CD4-positive, alpha-beta memory T cell (primary cell): ENCODE measurements at regions of chr4 and their contacts with region 1.

Region 1: GRCh38 chr4:154551872-154552686 is 1.9 kb upstream of the PLRG1 start:
- DNase-seq: peak; percentile 68 to 72 (median 68)
- H3K4me3 ChIP-seq: no peak overlapping the region
- H3K4me3 Mint-ChIP-seq: peak overlapping the region in 2 of 8 donors; percentile 29 to 57
- H3K27ac ChIP-seq: no peak overlapping the region
- H3K27ac Mint-ChIP-seq: peak overlapping the region in 3 of 7 donors; percentile 18 to 62 (median 47)
- H3K4me1 ChIP-seq: peaks cover 22% of the 10 kb centered on the region
- H3K4me1 Mint-ChIP-seq: peaks cover 13 to 28% (median 24%) of the 10 kb centered on the region in 4 donors
- H3K27me3 ChIP-seq: no peaks in the 10 kb centered on the region
- H3K27me3 Mint-ChIP-seq: no peaks in the 10 kb centered on the region

Region 2: DNA sequence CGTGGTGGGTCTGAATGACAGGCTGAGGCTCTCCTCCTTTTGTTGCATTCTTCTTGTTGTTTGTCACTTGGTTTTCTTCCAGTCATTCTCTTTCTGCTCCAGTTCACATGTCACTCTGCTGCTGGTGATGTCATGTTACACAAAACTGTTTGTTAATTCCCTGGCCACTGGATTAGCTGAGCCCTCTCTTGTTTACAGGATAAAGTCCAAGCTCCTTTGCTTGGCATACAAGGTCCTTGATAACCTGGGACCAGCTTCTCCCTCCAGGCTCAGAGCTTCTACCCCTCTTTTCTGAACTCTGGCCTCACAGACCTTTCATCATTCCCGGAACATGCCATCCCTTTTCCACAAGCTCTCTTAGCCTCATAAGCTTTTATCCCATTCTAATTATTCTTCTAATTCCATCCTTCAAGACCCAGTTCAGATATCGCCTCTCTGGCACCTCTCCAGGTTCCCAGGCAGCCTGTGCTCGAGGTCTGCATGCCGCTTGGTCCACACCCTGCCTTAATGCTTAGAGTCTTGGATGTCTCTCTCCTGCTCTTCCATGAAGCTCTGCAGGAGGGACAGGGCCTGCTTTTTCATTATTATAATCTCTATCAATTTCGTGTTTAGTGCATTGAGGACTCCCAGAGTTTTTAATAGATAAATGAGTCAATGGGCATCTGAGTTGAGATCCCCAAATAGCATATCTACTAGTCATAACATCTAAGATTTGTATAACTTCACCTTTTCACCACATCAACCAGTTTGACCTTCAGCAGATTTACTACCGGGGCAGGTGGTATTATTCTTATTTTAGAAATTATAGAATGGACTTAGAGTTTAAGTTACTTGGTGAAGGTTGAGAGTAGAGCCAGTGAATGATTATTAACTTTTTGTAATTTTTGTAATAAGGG is 987.2 kb before region 1 on chr4:
- CTCF ChIA-PET with region 1: no interaction called
- POLR2A ChIA-PET with region 1: no interaction called
- intact Hi-C with region 1: no loop called
- DNase-seq: no peak
- H3K4me3 ChIP-seq: no peak overlapping the region
- H3K4me3 Mint-ChIP-seq: peak overlapping the region in 1 of 8 donors; percentile 35
- H3K27ac ChIP-seq: no peak overlapping the region
- H3K27ac Mint-ChIP-seq: peak overlapping the region; percentile 28 to 70 (median 37)
- H3K4me1 ChIP-seq: no peaks in the 10 kb centered on the region
- H3K4me1 Mint-ChIP-seq: peaks cover 32 to 52% (median 42%) of the 10 kb centered on the region in 4 donors
- H3K27me3 ChIP-seq: no peaks in the 10 kb centered on the region
- H3K27me3 Mint-ChIP-seq: no peaks in the 10 kb centered on the region

Region 3: DNA sequence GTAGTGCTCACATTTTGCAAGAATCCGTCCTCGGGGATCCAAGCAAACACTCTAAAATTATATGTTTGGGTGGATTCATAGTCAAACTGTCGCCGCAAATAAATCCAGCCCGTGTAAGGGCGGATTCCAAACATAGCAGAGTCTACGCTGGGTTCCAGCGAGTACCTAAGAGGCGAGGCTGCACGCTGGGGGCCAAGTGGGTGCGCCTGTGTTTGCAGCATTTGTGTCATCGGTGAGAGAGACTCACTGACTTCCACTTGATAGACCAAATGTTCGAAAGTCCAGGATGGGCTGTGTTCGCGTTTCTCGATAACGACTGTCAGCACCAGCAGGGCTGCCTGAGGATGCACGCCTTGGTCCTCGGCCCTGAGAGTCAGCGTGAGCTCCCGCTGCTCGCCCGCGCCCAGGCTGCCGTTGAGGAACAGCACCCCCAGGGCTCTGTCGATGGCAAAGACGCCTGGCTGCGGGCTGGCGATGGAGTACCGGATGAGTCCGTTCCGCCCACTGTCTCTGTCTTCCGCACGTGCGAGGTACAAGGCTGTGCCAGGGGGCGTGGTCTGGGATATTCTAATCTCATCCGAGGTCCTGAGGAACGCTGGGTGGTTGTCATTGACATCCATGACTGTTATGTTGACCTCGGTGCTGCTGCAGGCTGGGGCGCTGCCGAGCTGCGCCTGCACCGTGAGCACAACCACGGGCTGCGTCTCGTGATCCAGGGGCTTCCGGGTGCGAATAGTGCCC is 219.2 kb before region 1 on chr4:
- CTCF ChIA-PET with region 1: no interaction called
- POLR2A ChIA-PET with region 1: no interaction called
- intact Hi-C with region 1: loop called (anchors 5 kb)
- DNase-seq: peak; percentile 34 to 64 (median 47)
- H3K4me3 ChIP-seq: peak overlapping the region in 1 of 2 donors; percentile 52
- H3K4me3 Mint-ChIP-seq: peak overlapping the region; percentile 75 to 92 (median 84)
- H3K27ac ChIP-seq: no peak overlapping the region
- H3K27ac Mint-ChIP-seq: peak overlapping the region in 4 of 7 donors; percentile 11 to 83 (median 52)
- H3K4me1 ChIP-seq: peaks cover 14% of the 10 kb centered on the region
- H3K4me1 Mint-ChIP-seq: peaks cover 5 to 13% (median 7%) of the 10 kb centered on the region in 4 donors
- H3K27me3 ChIP-seq: peaks cover 4% of the 10 kb centered on the region
- H3K27me3 Mint-ChIP-seq: peaks cover 9 to 10% of the 10 kb centered on the region in 2 donors

Region 4: DNA sequence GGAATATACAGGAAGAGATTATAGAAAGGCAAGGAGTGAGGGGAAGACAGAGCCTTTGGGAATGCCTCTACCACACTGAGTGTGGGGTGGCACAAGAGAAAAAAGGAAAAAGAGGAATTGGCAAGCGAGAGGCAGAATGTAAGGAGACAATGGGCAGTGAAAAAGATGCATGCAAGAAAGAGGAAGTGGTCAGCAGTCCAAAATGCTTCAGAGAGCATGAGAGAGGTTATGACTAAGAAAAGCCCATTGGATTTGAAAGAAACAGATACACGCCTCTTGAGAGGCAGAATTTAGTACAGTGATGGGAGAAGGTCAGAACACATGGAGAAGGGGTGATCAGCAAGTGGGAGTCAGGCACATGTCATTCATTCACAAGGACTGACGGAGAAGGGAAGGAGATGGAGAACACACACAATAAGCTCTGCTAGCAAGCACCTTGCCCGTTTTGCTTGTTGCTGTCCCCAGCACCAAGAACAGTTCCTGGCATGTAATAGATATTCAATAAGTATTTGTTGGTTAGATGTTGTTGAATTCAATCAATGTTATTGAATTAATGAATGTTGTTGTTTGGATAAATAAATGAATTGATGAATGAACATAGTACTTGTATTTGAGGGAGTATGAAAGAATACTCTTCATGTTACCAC is 66.8 kb before region 1 on chr4:
- CTCF ChIA-PET with region 1: no interaction called
- POLR2A ChIA-PET with region 1: no interaction called
- intact Hi-C with region 1: no loop called
- DNase-seq: no peak
- H3K4me3 ChIP-seq: no peak overlapping the region
- H3K4me3 Mint-ChIP-seq: no peak overlapping the region
- H3K27ac ChIP-seq: no peak overlapping the region
- H3K27ac Mint-ChIP-seq: no peak overlapping the region
- H3K4me1 ChIP-seq: no peaks in the 10 kb centered on the region
- H3K4me1 Mint-ChIP-seq: peaks cover 0 to 6% (median 0%) of the 10 kb centered on the region in 4 donors
- H3K27me3 ChIP-seq: peaks cover 5% of the 10 kb centered on the region
- H3K27me3 Mint-ChIP-seq: peaks cover 11 to 19% of the 10 kb centered on the region in 2 donors

Region 5: GRCh38 chr4:154590329-154591006 is 38.4 kb after region 1 on chr4 and contains the start of gene FGA:
- CTCF ChIA-PET with region 1: no interaction called
- POLR2A ChIA-PET with region 1: no interaction called
- intact Hi-C with region 1: no loop called
- DNase-seq: no peak
- H3K4me3 ChIP-seq: no peak within 1 kb of the TSS
- H3K4me3 Mint-ChIP-seq: no peak within 1 kb of the TSS
- H3K27ac ChIP-seq: no peak within 1 kb of the TSS
- H3K27ac Mint-ChIP-seq: no peak within 1 kb of the TSS
- H3K4me1 ChIP-seq: no peaks in the 10 kb centered on the region
- H3K4me1 Mint-ChIP-seq: peaks cover 0 to 2% (median 0%) of the 10 kb centered on the region in 4 donors
- H3K27me3 ChIP-seq: no peaks in the 10 kb centered on the region
- H3K27me3 Mint-ChIP-seq: peaks cover 13 to 19% of the 10 kb centered on the region in 2 donors
- total RNA-seq, gene FGA: not detected

Region 6: GRCh38 chr4:154741922-154742850 is 190.1 kb after region 1 on chr4:
- CTCF ChIA-PET with region 1: no interaction called
- POLR2A ChIA-PET with region 1: no interaction called
- intact Hi-C with region 1: no loop called
- DNase-seq: no peak
- H3K4me3 ChIP-seq: no peak overlapping the region
- H3K4me3 Mint-ChIP-seq: peak overlapping the region; percentile 25 to 91 (median 48)
- H3K27ac ChIP-seq: no peak overlapping the region
- H3K27ac Mint-ChIP-seq: no peak overlapping the region
- H3K4me1 ChIP-seq: peaks cover 18% of the 10 kb centered on the region
- H3K4me1 Mint-ChIP-seq: peaks cover 6 to 34% (median 12%) of the 10 kb centered on the region in 4 donors
- H3K27me3 ChIP-seq: peaks cover 13% of the 10 kb centered on the region
- H3K27me3 Mint-ChIP-seq: peaks cover 31 to 44% of the 10 kb centered on the region in 2 donors

Region 7: DNA sequence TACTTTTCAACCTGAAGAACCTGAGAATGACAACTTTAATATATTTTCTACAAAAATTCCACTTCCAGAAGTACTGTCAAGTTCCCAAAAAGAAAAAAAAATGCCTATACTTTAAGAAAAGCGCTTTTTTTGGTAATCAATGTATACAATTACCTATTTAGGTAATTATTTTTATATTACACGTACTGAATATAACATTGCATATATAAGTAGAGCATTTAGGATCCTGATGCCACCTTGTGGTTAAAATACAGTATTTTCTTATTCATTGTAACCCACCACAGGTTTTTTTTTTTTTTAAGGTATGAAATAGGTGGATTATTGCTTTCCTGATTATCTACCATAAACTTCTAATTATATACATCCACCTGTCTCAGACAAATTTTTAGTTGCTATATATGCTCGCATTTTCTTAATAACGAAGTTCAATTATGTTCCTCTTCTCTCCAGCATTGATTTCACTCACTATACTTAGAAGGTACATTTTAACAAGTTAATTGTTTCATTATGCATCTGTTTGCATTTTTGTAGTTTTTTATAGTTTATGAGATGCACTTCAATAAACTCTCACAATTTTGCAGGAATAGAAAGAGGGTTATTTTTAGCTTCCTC is 819.5 kb after region 1 on chr4:
- CTCF ChIA-PET with region 1: interaction called, 37 read pairs
- POLR2A ChIA-PET with region 1: interaction called, 19 read pairs
- intact Hi-C with region 1: loop called (anchors 1 kb)
- DNase-seq: peak in 4 of 5 donors; percentile 24 to 41 (median 28)
- H3K4me3 ChIP-seq: no peak overlapping the region
- H3K4me3 Mint-ChIP-seq: no peak overlapping the region
- H3K27ac ChIP-seq: no peak overlapping the region
- H3K27ac Mint-ChIP-seq: peak overlapping the region in 1 of 7 donors; percentile 50
- H3K4me1 ChIP-seq: peaks cover 10% of the 10 kb centered on the region
- H3K4me1 Mint-ChIP-seq: peaks cover 5 to 18% (median 14%) of the 10 kb centered on the region in 4 donors
- H3K27me3 ChIP-seq: no peaks in the 10 kb centered on the region
- H3K27me3 Mint-ChIP-seq: no peaks in the 10 kb centered on the region

Region 8: DNA sequence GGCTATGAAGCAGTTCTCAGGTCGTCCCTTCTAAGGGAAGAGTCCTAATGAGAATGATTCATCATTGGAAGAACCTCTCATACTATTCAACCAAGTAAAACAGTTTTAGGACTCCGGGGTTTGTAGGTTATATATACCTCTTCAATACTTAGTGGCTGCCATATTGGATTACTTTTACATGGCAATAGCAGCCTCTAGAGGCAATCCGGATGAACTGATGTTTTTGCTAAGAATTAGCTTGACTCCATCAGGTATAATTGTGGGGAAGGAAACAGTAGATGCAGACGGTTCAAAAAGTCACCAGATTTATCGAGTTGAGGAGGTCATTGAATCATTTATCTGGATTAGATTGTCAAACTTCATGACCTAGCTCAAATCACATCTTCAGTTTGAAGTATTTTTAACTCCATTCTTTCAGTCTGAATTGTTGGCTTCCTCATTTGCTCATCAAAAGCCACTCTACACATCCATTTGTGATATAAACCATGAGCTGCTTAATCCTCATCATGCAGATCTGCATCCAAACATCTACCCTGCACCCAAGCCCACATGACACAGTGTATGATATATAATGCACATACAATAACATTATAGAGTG is 1235.1 kb after region 1 on chr4:
- CTCF ChIA-PET with region 1: no interaction called
- POLR2A ChIA-PET with region 1: no interaction called
- intact Hi-C with region 1: loop called (anchors 10 kb)
- DNase-seq: peak in 3 of 5 donors; percentile 4 to 15 (median 13)
- H3K4me3 ChIP-seq: no peak overlapping the region
- H3K4me3 Mint-ChIP-seq: peak overlapping the region in 1 of 8 donors; percentile 27
- H3K27ac ChIP-seq: no peak overlapping the region
- H3K27ac Mint-ChIP-seq: no peak overlapping the region
- H3K4me1 ChIP-seq: no peaks in the 10 kb centered on the region
- H3K4me1 Mint-ChIP-seq: peaks cover 0 to 8% (median 2%) of the 10 kb centered on the region in 4 donors
- H3K27me3 ChIP-seq: no peaks in the 10 kb centered on the region
- H3K27me3 Mint-ChIP-seq: peaks cover 1 to 5% of the 10 kb centered on the region in 2 donors